ENCODE measurements at regions of chr13 and their contacts with region 1.

Region 1: DNA sequence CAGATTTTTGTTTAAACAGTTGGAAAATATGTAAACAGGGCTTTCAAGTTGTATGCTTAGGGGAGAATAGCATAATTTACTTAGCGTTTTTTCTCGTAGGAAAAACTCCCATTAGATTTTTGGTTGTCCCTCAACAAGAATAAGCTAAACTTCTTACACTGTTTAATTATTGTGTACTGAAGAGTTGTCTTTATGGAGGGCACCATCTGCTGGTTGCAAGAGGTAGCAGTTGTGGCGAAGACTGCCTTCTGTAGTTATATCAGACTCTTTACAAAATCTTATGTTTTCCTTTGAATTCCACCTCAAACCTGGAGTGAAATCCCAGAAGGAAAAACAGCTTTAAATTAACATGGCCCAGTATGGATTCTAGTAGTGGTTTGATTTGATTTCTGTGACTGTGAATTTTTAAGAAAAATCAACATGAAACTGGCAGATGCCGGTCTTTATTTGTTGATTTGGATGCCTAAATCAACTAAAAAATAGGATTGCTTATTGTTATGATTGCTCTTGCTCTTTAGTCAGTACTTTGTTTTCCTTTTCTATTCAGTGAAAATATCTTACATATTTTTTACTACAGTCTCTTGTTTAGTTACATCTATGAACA is 53.4 kb downstream of the PDS5B start:
- DNase-seq: no peak
- ATAC-seq: peak; percentile 79 to 94
- H3K4me3 ChIP-seq: no peak overlapping the region
- H3K27ac ChIP-seq: no peak overlapping the region
- H3K4me1 ChIP-seq: peaks cover 11% of the 10 kb centered on the region
- H3K27me3 ChIP-seq: no peaks in the 10 kb centered on the region
- CTCF ChIP-seq: peak; percentile 81

Region 2: DNA sequence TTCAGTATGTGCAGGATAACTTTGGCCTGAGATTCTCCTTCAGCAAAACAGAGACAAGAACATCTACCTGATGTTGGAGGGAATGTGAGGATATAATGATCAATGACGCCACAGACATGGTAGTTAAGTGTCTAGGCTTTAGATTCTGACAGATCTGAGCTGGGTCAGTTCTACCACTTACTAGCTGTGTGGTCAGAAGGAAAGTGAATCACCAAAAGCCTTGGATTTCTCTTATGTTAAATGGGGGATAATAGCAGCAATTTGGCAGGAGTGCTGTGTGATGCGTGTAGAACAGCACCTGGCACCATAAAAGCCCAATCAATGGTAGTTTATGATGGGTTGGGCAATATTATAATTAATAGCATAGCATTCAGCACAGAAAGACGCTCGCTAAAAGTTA is 858.5 kb before region 1 on chr13:
- intact Hi-C with region 1: no loop called
- DNase-seq: no peak
- ATAC-seq: no peak
- H3K4me3 ChIP-seq: no peak overlapping the region
- H3K27ac ChIP-seq: no peak overlapping the region
- H3K4me1 ChIP-seq: no peaks in the 10 kb centered on the region
- H3K27me3 ChIP-seq: no peaks in the 10 kb centered on the region
- CTCF ChIP-seq: no peak

Region 3: DNA sequence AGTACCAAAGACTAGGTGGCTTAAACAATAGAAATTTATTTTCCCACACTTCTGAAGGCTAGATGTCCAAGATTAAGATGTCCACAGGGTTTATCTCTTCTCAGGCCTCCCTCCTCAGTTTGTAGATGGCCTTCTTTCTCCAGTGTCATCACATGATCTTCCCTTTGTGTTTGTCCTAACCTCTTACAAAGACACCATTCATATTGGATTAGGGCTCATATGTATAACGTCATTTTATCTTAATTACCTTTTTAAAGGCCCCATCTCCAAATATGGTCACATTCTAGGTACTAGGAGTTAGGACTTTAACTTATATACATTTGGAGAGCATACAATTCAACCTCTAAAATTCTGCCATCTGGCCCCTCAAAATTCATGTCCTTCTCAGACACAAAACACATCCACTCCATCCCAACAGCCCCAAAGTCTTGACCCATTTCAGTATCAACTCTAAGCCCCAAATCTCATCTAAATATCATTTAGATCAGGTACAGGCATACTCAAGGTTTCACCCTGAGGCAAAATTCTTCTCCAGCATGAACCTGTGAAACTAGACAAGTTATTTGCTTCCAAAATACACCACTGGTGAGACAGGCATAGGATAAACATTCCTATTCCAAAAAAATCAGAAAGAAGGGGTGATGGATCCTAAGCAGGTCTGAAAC is 135.2 kb before region 1 on chr13:
- intact Hi-C with region 1: no loop called
- DNase-seq: no peak
- ATAC-seq: no peak
- H3K4me3 ChIP-seq: no peak overlapping the region
- H3K27ac ChIP-seq: no peak overlapping the region
- H3K4me1 ChIP-seq: no peaks in the 10 kb centered on the region
- H3K27me3 ChIP-seq: no peaks in the 10 kb centered on the region
- CTCF ChIP-seq: no peak

Region 4: DNA sequence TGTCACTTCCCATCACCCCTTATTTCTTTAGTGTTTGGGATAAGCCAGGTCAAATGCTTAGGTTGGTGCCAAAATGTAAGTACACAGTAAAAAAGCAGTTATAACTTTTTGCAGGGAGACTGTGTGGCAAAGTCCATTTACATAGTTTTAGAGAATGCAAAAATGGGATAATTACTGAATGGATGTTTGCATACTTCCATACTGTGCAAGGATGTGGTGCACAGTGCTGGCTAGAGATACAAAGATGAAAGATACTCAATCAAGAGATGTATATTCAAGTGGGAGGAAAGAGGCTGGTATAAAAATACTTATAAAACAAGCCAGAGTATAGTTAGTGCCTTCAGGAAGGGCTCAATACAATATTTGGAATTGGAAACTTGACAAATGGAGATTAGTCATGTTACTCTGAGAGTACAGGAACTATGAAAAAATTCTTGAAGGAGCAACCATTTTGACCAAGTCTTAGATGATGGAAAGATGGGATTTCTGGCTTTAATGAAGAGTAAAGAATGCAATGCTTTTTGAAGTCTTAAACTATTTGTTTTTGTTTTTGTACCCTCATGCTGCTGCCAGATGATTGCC is 45.4 kb before region 1 on chr13:
- intact Hi-C with region 1: loop called (anchors 5 kb)
- DNase-seq: no peak
- ATAC-seq: no peak
- H3K4me3 ChIP-seq: no peak overlapping the region
- H3K27ac ChIP-seq: no peak overlapping the region
- H3K4me1 ChIP-seq: peaks cover 21% of the 10 kb centered on the region
- H3K27me3 ChIP-seq: no peaks in the 10 kb centered on the region
- CTCF ChIP-seq: no peak

Region 5: DNA sequence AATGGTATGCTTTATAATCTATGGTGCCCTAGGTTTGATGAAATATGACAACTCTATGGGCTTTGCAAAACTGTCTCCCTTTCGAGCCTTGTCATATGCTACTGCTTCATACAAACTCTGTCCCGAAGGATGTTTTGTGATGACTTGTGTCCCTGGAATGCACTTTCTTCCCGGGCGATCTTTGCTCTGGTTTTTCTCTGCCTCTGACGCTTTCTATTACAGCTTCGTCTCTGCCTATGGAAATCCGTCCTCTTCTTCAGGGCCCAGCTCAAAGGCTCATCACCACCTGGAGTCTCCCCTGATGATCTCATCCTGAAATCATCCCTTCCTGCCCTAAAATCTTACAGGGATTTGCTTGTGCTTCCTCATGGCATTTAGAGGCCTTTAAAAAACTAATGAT is 185.1 kb after region 1 on chr13:
- intact Hi-C with region 1: no loop called
- DNase-seq: no peak
- ATAC-seq: no peak
- H3K4me3 ChIP-seq: no peak overlapping the region
- H3K27ac ChIP-seq: no peak overlapping the region
- H3K4me1 ChIP-seq: no peaks in the 10 kb centered on the region
- H3K27me3 ChIP-seq: no peaks in the 10 kb centered on the region
- CTCF ChIP-seq: no peak